ENCODE measurements at regions of chr18 and their contacts with region 1.

Region 1: GRCh38 chr18:9038277-9038871 is 64.1 kb upstream of the NDUFV2 start:
- DNase-seq: peak; percentile 74
- H3K4me3 ChIP-seq: no peak overlapping the region
- H3K27ac ChIP-seq: peak overlapping the region; percentile 71
- H3K4me1 ChIP-seq: peaks cover 12% of the 10 kb centered on the region
- H3K27me3 ChIP-seq: no peaks in the 10 kb centered on the region
- CTCF ChIP-seq: no peak
- POLR2A ChIP-seq: no peak

Region 2: DNA sequence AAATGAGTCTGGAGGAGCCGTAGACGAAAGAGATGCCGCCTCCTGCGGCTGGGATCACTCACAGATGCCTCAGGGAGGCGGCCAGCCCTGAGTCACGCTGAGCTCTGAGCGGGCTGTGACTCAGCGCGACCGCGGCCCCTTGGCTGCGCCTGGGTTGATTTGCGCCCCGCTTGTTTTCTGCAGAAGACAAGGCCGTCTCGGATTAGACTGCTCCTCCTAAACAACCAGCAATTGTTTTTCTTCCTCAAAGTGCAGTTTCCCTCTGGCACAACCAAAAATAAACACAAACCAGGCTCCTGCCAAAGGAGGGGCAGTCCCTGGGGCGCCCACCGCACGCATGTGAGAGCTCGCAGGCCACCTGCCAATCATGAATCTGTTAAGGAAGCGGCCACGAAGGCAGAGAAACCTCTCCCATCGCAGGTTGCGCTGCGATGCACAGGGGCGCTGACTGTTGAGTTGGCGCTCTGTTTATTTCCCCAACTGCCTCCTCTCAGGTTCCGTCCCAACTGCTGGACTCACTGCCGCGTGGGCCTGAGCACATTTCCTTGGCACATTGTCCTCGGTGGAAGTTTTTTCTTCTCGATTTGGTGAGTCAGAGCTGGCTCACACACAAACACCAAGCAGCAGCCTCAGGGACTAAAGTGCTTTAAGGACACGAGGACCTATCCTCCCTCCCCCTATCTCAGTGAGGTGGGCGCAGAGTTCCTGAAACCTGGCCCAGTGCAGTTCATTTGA is 21.0 kb before region 1 on chr18:
- CTCF ChIA-PET with region 1: interaction called, 7 read pairs
- POLR2A ChIA-PET with region 1: no interaction called
- dilution Hi-C with region 1: no loop called
- intact Hi-C with region 1: loop called (anchors 2 kb)
- DNase-seq: peak; percentile 87
- H3K4me3 ChIP-seq: no peak overlapping the region
- H3K27ac ChIP-seq: peak overlapping the region; percentile 90
- H3K4me1 ChIP-seq: peaks cover 23% of the 10 kb centered on the region
- H3K27me3 ChIP-seq: no peaks in the 10 kb centered on the region
- CTCF ChIP-seq: no peak
- POLR2A ChIP-seq: peak; percentile 23

Region 3: GRCh38 chr18:9575558-9575957 is 537.2 kb after region 1 on chr18:
- CTCF ChIA-PET with region 1: no interaction called
- POLR2A ChIA-PET with region 1: no interaction called
- dilution Hi-C with region 1: no loop called
- intact Hi-C with region 1: no loop called
- DNase-seq: peak; percentile 94
- H3K4me3 ChIP-seq: no peak overlapping the region
- H3K27ac ChIP-seq: no peak overlapping the region
- H3K4me1 ChIP-seq: peaks cover 28% of the 10 kb centered on the region
- H3K27me3 ChIP-seq: no peaks in the 10 kb centered on the region
- CTCF ChIP-seq: peak; percentile 80 to 84
- POLR2A ChIP-seq: no peak

Measured in endothelial cell of umbilical vein (primary cell).